MCF 10A (cell line): ENCODE measurements at regions of chr17 and their contacts with region 1.

Region 1: DNA sequence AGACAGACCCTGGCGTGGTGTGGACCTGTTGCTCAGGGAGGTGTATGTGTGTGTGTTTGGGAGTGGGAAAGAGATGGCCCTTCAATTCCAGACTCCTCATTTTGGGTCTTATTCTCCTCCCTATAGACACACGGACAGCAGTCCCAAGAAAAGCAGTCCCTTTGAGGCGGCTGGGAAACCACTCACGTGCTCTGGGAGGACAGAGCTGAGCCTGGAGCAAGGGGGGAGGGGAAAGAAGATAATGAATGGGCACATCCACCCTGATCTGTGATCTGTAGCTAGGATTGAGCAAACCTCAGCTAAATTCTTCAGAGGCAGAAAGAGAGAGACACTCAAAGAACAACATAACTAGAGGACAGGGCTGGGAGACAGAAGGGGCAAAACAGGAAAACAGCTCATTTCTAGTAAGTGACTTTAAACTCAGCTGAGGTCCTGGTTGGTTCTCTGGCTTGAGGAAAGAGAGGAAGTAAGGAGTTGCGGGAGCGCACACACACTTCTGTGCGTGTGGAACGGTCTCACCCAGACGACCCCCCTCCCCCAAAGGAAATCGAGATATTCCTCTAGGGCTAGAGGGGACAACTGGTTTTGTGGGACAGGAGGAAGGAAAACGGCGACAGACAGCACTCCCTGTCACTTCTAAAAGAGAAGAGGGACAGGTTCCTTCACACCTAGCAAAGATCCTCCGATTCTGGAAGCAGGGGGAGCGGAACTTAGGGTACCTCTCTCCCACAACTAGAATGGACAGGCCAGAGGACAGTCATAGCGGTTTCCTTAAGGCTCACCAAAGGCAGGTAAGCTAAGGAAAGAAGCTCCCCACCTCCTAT is 658 bp downstream of the RAB5C start:
- DNase-seq: no peak
- H3K4me3 Mint-ChIP-seq: peak overlapping the region; percentile 84
- H3K27ac Mint-ChIP-seq: peak overlapping the region; percentile 90
- H3K4me1 Mint-ChIP-seq: peaks cover 16% of the 10 kb centered on the region
- H3K27me3 Mint-ChIP-seq: no peaks in the 10 kb centered on the region
- CTCF ChIP-seq: no peak

Region 2: DNA sequence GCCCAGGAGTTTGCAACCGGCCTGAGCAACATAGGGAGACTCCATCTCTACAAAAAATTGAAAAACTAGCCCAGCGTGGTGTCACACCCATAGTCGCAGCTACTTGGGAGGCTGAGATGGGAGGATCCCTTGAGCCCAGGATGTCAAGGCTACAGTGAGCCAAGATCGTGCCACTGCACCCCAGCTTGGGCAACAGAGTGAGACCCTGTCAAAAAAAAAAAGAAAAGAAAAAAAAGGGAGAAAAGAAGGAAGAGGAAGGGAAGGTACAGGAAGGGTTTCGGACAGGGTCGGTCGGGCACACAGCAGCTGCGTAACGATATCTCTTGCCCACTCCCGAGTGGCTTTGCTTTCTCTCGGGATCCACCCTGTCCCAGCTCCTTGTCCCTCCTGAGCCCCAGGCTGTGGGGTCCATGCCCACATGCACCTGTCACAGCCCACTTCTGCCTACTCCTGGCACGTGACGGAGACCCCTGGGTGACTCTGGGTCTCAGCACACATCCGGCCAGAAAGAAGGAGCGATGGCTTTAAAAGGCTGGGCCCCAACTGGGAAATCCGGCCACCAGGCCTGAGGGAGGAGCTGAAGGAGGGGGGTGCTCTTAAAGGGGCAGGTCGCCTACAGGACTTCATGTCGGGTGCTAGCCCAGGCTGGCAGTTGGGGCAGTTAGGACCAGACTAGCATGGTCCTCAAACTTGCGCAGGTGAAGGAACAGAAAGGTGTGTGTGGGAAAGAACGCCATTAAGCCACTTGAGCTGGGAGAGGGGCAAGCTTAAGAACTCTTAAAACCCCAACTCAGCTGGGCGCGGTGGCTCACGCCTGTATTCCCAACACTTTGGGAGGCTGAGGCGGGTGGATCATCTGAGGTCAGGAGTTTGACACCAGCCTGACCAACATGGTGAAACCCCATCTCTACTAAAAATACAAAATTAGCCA is 40.1 kb after region 1 on chr17 and contains the start of gene GHDC:
- CTCF ChIA-PET with region 1: no interaction called
- POLR2A ChIA-PET with region 1: interaction called, 11 read pairs
- intact Hi-C with region 1: no loop called
- DNase-seq: peak; percentile 82
- H3K4me3 Mint-ChIP-seq: peak within 1 kb of the TSS; percentile 92
- H3K27ac Mint-ChIP-seq: peak within 1 kb of the TSS; percentile 79
- H3K4me1 Mint-ChIP-seq: peaks cover 15% of the 10 kb centered on the region
- H3K27me3 Mint-ChIP-seq: no peaks in the 10 kb centered on the region
- CTCF ChIP-seq: no peak
- total RNA-seq, gene GHDC: 6.8 and 8.9 TPM in 2 replicates